PC-9 (cell line): ENCODE measurements at regions of chr6 and their contacts with region 1.

Region 1: GRCh38 chr6:122609856-122610689 is at the start of gene PKIB:
- DNase-seq: peak; percentile 82 to 84
- H3K4me3 ChIP-seq: peak within 1 kb of the TSS; percentile 87
- H3K27ac ChIP-seq: peak within 1 kb of the TSS; percentile 65
- H3K4me1 ChIP-seq: peaks cover 23% of the 10 kb centered on the region
- H3K27me3 ChIP-seq: no peaks in the 10 kb centered on the region
- CTCF ChIP-seq: no peak; the same call in none of the 2 replicates
- total RNA-seq, gene PKIB: 4.8 and 7.0 TPM in 2 replicates

Region 2: DNA sequence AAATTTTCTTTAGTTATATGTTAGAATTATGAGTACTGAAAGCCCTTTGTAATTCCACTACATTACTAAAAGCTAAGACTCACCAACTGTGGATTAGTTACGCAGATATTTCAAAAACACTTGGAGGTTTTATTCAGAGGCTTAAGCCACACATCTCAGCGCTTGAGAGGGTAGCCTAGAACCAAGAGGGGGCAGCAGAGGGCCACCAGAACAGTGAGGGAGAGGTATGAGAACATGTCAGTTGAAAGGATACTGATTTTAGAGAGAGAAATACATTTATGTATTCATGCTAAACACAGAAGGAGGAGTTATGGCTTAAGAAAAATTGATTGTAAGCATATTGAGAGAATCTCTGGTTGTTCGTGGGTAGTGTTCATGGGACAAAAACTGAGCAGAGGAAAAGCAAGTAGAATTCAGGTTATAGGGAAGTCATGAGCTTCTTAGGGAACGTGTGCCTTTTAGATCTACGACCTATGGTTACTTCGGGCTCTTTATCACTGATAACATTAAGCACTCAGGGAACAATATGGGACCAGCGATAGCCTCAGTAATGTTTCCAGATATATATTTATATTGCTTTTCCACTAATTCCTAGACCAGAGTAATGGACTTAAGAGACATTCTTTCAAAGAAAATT is 118.0 kb before region 1 on chr6:
- CTCF ChIA-PET with region 1: no interaction called
- POLR2A ChIA-PET with region 1: no interaction called
- intact Hi-C with region 1: loop called (anchors 10 kb)
- DNase-seq: peak; percentile 54 to 62
- H3K4me3 ChIP-seq: no peak overlapping the region
- H3K27ac ChIP-seq: no peak overlapping the region
- H3K4me1 ChIP-seq: peaks cover 13% of the 10 kb centered on the region
- H3K27me3 ChIP-seq: no peaks in the 10 kb centered on the region
- CTCF ChIP-seq: peak; percentile 96

Region 3: GRCh38 chr6:122653094-122653493 is 43.0 kb after region 1 on chr6:
- CTCF ChIA-PET with region 1: no interaction called
- POLR2A ChIA-PET with region 1: no interaction called
- intact Hi-C with region 1: loop called (anchors 5 kb)
- DNase-seq: peak; percentile 15 to 94
- H3K4me3 ChIP-seq: peak overlapping the region; percentile 14; the same call in 1 of the 2 replicates
- H3K27ac ChIP-seq: peak overlapping the region; percentile 94
- H3K4me1 ChIP-seq: peaks cover 58% of the 10 kb centered on the region
- H3K27me3 ChIP-seq: no peaks in the 10 kb centered on the region
- CTCF ChIP-seq: no peak

Region 4: DNA sequence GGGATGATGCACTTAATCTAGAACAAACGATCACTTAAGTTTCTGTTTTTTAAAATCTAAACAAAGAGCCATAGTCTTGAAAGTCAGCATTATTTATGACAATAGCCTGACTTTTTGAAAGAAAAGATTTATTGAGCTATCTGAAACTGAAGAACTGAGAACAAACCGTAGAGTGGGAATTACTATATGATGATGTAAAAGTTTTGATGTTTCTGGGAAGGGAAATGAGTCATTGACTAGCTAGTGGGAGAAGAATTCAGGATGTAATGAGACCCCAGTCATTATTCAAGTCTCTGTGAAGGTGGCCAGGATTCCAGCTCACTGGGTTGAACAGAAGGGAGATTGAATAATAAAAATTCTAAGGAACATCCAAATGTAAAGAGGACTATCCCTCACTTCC is 86.0 kb after region 1 on chr6:
- CTCF ChIA-PET with region 1: no interaction called
- POLR2A ChIA-PET with region 1: interaction called, 9 read pairs
- intact Hi-C with region 1: loop called (anchors 2 kb)
- DNase-seq: peak in 1 of 2 experiments; percentile 77
- H3K4me3 ChIP-seq: peak overlapping the region; percentile 12; the same call in 1 of the 2 replicates
- H3K27ac ChIP-seq: peak overlapping the region; percentile 96
- H3K4me1 ChIP-seq: peaks cover 58% of the 10 kb centered on the region
- H3K27me3 ChIP-seq: no peaks in the 10 kb centered on the region
- CTCF ChIP-seq: no peak